Naive thymus-derived CD8-positive, alpha-beta T cell (primary cell): ENCODE measurements at regions of chr2 and their contacts with region 1.

Region 1: GRCh38 chr2:218806346-218806978 is 24.5 kb downstream of the CYP27A1 start:
- DNase-seq: no peak
- ATAC-seq: no peak
- H3K4me3 Mint-ChIP-seq: no peak overlapping the region
- H3K27ac Mint-ChIP-seq: peak overlapping the region in 1 of 10 donors; percentile 8
- H3K4me1 Mint-ChIP-seq: peaks cover 0 to 9% (median 7%) of the 10 kb centered on the region in 4 donors
- H3K27me3 Mint-ChIP-seq: peaks cover 20 to 40% (median 31%) of the 10 kb centered on the region in 5 donors

Region 2: GRCh38 chr2:218839430-218839829 is 33.0 kb after region 1 on chr2:
- POLR2A ChIA-PET with region 1: no interaction called
- DNase-seq: no peak
- ATAC-seq: no peak
- H3K4me3 Mint-ChIP-seq: no peak overlapping the region
- H3K27ac Mint-ChIP-seq: no peak overlapping the region
- H3K4me1 Mint-ChIP-seq: no peaks in the 10 kb centered on the region
- H3K27me3 Mint-ChIP-seq: peaks cover 22 to 52% (median 47%) of the 10 kb centered on the region in 5 donors

Region 3: DNA sequence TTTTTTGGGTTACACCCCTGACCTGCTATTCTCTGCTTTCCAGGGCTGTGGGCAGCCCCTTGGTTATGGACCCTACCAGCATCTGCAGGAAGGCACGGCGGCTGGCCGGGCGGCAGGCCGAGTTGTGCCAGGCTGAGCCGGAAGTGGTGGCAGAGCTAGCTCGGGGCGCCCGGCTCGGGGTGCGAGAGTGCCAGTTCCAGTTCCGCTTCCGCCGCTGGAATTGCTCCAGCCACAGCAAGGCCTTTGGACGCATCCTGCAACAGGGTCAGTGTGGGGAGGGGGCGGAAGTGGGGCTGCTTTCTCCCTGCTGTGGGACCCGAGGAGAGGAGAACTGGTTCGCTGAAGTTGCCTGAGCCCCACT is 64.5 kb after region 1 on chr2:
- POLR2A ChIA-PET with region 1: no interaction called
- DNase-seq: no peak
- ATAC-seq: peak in 1 of 2 donors; percentile 9
- H3K4me3 Mint-ChIP-seq: peak overlapping the region; percentile 58 to 81 (median 71)
- H3K27ac Mint-ChIP-seq: peak overlapping the region in 1 of 10 donors; percentile 41
- H3K4me1 Mint-ChIP-seq: peaks cover 12 to 29% (median 26%) of the 10 kb centered on the region in 4 donors
- H3K27me3 Mint-ChIP-seq: peaks cover 14 to 53% (median 24%) of the 10 kb centered on the region in 5 donors

Region 4: GRCh38 chr2:219300022-219300421 is 493.6 kb after region 1 on chr2:
- POLR2A ChIA-PET with region 1: interaction called, 10 read pairs
- DNase-seq: no peak
- ATAC-seq: no peak
- H3K4me3 Mint-ChIP-seq: no peak overlapping the region
- H3K27ac Mint-ChIP-seq: no peak overlapping the region
- H3K4me1 Mint-ChIP-seq: peaks cover 7 to 34% (median 27%) of the 10 kb centered on the region in 4 donors
- H3K27me3 Mint-ChIP-seq: peaks cover 5 to 25% (median 18%) of the 10 kb centered on the region in 5 donors